Natural killer cell (primary cell): ENCODE measurements at regions of chrX and their contacts with region 1.

Region 1: DNA sequence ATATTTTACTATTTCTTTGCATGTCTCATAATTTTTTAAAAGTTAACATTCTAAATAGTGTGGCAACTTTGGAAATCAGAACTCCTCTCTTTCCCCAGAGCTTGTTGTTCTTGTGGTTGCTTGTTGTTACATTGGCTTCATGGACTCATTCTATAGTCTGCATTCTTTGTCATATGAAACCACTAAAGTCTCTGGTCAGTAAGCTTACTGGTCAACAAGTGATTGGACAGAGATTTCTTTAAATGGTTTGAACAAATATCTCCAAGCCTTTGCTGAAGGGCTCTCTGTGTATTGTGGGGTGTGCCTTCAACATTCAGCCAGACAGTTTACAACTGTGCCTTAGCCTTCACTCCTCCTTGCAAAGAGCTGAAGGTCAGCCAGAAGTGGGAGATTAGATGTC is 147.2 kb downstream of the OPHN1 start:
- DNase-seq: no peak
- ATAC-seq: no peak
- H3K4me3 ChIP-seq: no peak overlapping the region
- H3K4me3 Mint-ChIP-seq: peak overlapping the region; percentile 71
- H3K27ac ChIP-seq: no peak overlapping the region
- H3K27ac Mint-ChIP-seq: peak overlapping the region; percentile 77 to 87
- H3K4me1 ChIP-seq: peaks cover 12% of the 10 kb centered on the region
- H3K4me1 Mint-ChIP-seq: peaks cover 52 to 64% of the 10 kb centered on the region in 2 donors
- H3K27me3 ChIP-seq: no peaks in the 10 kb centered on the region
- H3K27me3 Mint-ChIP-seq: peaks cover 0 to 21% of the 10 kb centered on the region in 2 donors
- CTCF ChIP-seq: no peak

Region 2: GRCh38 chrX:68261060-68261672 is 24.9 kb before region 1 on chrX:
- intact Hi-C with region 1: no loop called
- DNase-seq: no peak
- ATAC-seq: no peak
- H3K4me3 ChIP-seq: no peak overlapping the region
- H3K4me3 Mint-ChIP-seq: no peak overlapping the region
- H3K27ac ChIP-seq: no peak overlapping the region
- H3K27ac Mint-ChIP-seq: no peak overlapping the region
- H3K4me1 ChIP-seq: no peaks in the 10 kb centered on the region
- H3K4me1 Mint-ChIP-seq: peaks cover 0 to 8% of the 10 kb centered on the region in 2 donors
- H3K27me3 ChIP-seq: no peaks in the 10 kb centered on the region
- H3K27me3 Mint-ChIP-seq: peaks cover 6 to 22% of the 10 kb centered on the region in 2 donors
- CTCF ChIP-seq: no peak

Region 3: GRCh38 chrX:68304602-68305001 is 18.5 kb after region 1 on chrX:
- intact Hi-C with region 1: loop called (anchors 2 kb)
- DNase-seq: peak in 1 of 2 donors; percentile 8
- ATAC-seq: peak; percentile 91 to 99 (median 91)
- H3K4me3 ChIP-seq: no peak overlapping the region
- H3K4me3 Mint-ChIP-seq: peak overlapping the region; percentile 50
- H3K27ac ChIP-seq: peak overlapping the region; percentile 55
- H3K27ac Mint-ChIP-seq: peak overlapping the region; percentile 13 to 54
- H3K4me1 ChIP-seq: peaks cover 5% of the 10 kb centered on the region
- H3K4me1 Mint-ChIP-seq: peaks cover 11 to 14% of the 10 kb centered on the region in 2 donors
- H3K27me3 ChIP-seq: no peaks in the 10 kb centered on the region
- H3K27me3 Mint-ChIP-seq: peaks cover 0 to 20% of the 10 kb centered on the region in 2 donors
- CTCF ChIP-seq: no peak

Region 4: GRCh38 chrX:68440940-68441339 is 154.9 kb after region 1 on chrX:
- intact Hi-C with region 1: loop called (anchors 5 kb)
- DNase-seq: no peak
- ATAC-seq: no peak
- H3K4me3 ChIP-seq: no peak overlapping the region
- H3K4me3 Mint-ChIP-seq: no peak overlapping the region
- H3K27ac ChIP-seq: no peak overlapping the region
- H3K27ac Mint-ChIP-seq: no peak overlapping the region
- H3K4me1 ChIP-seq: peaks cover 11% of the 10 kb centered on the region
- H3K4me1 Mint-ChIP-seq: peaks cover 8 to 24% of the 10 kb centered on the region in 2 donors
- H3K27me3 ChIP-seq: peaks cover 12% of the 10 kb centered on the region
- H3K27me3 Mint-ChIP-seq: peaks cover 23 to 55% of the 10 kb centered on the region in 2 donors
- CTCF ChIP-seq: no peak

Region 5: DNA sequence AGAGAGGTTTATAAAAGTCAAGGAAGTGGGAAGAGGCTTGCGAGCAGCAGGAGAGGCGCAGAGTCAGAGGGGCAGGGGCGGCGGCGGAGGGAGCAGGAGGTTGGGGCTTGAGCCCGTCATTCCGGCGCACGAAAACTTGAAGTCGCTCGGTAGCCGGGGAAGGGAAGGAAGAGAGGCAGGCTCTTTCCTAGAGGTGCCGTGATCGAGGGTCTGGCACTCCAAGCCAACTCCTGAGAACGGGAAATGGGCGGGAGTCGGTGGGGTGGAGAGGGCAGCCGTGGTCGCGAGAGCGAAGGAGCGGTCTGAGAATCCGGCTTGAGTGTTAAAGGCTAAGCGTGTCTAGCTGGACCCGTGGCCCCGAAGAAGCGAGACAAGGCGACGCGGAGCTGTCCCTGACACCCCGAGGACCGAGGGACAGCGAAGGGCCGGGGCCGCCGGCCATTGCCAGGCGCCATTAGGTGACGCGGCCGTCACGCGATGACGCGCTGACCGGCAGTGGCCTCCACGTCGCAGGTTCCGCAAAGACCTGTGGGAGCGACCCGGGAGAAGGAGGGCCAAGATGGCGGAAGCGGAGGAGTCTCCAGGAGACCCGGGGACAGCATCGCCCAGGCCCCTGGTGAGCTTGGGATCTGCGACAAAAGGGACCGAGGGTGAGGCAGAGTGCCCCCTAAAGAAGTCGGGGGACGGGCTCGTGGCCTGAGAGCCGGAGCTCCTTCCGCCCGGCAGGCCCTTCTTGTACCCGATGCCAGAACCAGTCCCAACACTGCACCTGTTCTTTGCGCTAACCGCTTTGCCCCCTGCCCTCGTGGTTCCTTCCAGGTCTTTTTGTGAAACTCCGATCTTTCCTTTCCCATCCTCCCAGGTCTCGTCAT is 212.7 kb after region 1 on chrX and contains the start of gene YIPF6:
- intact Hi-C with region 1: no loop called
- DNase-seq: peak; percentile 62 to 79
- ATAC-seq: peak; percentile 93 to 96 (median 94)
- H3K4me3 ChIP-seq: peak within 1 kb of the TSS; percentile 93
- H3K4me3 Mint-ChIP-seq: peak within 1 kb of the TSS; percentile 98
- H3K27ac ChIP-seq: peak within 1 kb of the TSS; percentile 97
- H3K27ac Mint-ChIP-seq: peak within 1 kb of the TSS; percentile 95 to 99
- H3K4me1 ChIP-seq: peaks cover 14% of the 10 kb centered on the region
- H3K4me1 Mint-ChIP-seq: peaks cover 17 to 40% of the 10 kb centered on the region in 2 donors
- H3K27me3 ChIP-seq: no peaks in the 10 kb centered on the region
- H3K27me3 Mint-ChIP-seq: no peaks in the 10 kb centered on the region
- CTCF ChIP-seq: no peak
- total RNA-seq, gene YIPF6: 14.1 to 22.0 (median 18.9) TPM